ENCODE measurements at regions of chr11 and their contacts with region 1.

Region 1: GRCh38 chr11:33936725-33937604 is 45.1 kb upstream of the LMO2 start:
- DNase-seq: peak; percentile 67 to 95 (median 78)
- ATAC-seq: peak; percentile 67
- H3K4me3 ChIP-seq: 0 out of 2 replicates have a peak overlapping the region, but pooled peaks have one; percentile 8
- H3K27ac ChIP-seq: peak overlapping the region; percentile 85
- H3K4me1 ChIP-seq: peaks cover 36 to 85% of the 10 kb centered on the region in 2 experiments
- H3K27me3 ChIP-seq: no peaks in the 10 kb centered on the region
- CTCF ChIP-seq: no peak
- EP300 ChIP-seq: peak; percentile 87
- POLR2A ChIP-seq: peak; percentile 48; the same call in 1 of the 2 replicates
- RAD21 ChIP-seq: peak in 1 of 2 experiments; percentile 29; a peak in 2 of 4 replicates

Region 2: GRCh38 chr11:33869481-33870422 is 67.2 kb before region 1 on chr11:
- CTCF ChIA-PET with region 1: no interaction called
- POLR2A ChIA-PET with region 1: no interaction called
- in situ Hi-C with region 1: no loop called
- intact Hi-C with region 1: loop called (anchors 2 kb)
- DNase-seq: peak; percentile 61 to 75 (median 70)
- ATAC-seq: peak; percentile 57
- H3K4me3 ChIP-seq: peak overlapping the region; percentile 75
- H3K27ac ChIP-seq: peak overlapping the region; percentile 75
- H3K4me1 ChIP-seq: peaks cover 32 to 43% of the 10 kb centered on the region in 2 experiments
- H3K27me3 ChIP-seq: no peaks in the 10 kb centered on the region
- CTCF ChIP-seq: no peak
- EP300 ChIP-seq: no peak
- POLR2A ChIP-seq: no peak
- RAD21 ChIP-seq: no peak

Region 3: GRCh38 chr11:33893711-33894397 is 43.1 kb before region 1 on chr11:
- CTCF ChIA-PET with region 1: no interaction called
- POLR2A ChIA-PET with region 1: interaction called, 7 read pairs
- in situ Hi-C with region 1: no loop called
- intact Hi-C with region 1: loop called (anchors 1 kb)
- DNase-seq: peak in 1 of 4 experiments; percentile 60
- ATAC-seq: peak; percentile 3; the same call in 1 of the 3 replicates
- H3K4me3 ChIP-seq: no peak overlapping the region
- H3K27ac ChIP-seq: peak overlapping the region; percentile 76
- H3K4me1 ChIP-seq: peaks cover 39 to 58% of the 10 kb centered on the region in 2 experiments
- H3K27me3 ChIP-seq: no peaks in the 10 kb centered on the region
- CTCF ChIP-seq: no peak
- EP300 ChIP-seq: no peak
- POLR2A ChIP-seq: no peak
- RAD21 ChIP-seq: no peak